GM23248 (cell line): ENCODE measurements at regions of chr9 and their contacts with region 1.

Region 1: DNA sequence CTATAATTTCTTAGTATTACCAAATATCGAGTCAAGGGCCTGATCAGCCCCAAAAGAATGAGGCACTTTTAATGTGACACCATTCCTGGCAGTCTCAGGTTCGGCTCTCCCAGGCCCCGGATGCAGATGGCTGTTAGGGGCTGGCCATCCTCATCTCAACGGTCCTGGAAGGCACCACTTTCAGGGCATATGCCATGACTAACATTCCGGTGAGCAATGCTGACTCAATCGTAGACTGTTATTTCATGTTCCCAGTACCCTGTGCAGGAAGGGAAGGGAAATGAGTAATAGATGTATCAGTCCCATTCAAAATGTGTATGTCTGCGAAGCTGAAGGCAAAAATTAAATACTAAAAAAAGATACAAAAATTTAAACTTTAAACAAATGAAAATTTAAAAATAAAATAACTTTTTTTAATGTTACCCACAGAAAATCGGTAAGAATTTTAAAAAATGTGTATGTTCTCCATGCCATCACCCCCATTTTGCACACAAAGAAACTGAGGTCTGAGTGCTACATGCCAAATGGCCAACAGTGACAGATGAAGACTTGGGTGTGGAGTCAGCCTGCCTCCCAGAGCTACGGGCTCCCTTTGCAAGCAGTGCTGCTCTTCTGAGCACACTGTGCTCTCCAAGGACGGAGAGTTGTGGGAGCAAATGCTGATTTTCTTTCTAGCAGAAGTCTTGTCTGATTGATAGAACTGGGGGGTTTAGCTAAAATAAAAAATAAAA is 79.0 kb downstream of the GLDC start:
- DNase-seq: peak; percentile 99
- H3K4me3 ChIP-seq: peak overlapping the region; percentile 69
- H3K27ac ChIP-seq: peak overlapping the region; percentile 98
- H3K4me1 ChIP-seq: peaks cover 41% of the 10 kb centered on the region
- H3K27me3 ChIP-seq: no peaks in the 10 kb centered on the region

Region 2: DNA sequence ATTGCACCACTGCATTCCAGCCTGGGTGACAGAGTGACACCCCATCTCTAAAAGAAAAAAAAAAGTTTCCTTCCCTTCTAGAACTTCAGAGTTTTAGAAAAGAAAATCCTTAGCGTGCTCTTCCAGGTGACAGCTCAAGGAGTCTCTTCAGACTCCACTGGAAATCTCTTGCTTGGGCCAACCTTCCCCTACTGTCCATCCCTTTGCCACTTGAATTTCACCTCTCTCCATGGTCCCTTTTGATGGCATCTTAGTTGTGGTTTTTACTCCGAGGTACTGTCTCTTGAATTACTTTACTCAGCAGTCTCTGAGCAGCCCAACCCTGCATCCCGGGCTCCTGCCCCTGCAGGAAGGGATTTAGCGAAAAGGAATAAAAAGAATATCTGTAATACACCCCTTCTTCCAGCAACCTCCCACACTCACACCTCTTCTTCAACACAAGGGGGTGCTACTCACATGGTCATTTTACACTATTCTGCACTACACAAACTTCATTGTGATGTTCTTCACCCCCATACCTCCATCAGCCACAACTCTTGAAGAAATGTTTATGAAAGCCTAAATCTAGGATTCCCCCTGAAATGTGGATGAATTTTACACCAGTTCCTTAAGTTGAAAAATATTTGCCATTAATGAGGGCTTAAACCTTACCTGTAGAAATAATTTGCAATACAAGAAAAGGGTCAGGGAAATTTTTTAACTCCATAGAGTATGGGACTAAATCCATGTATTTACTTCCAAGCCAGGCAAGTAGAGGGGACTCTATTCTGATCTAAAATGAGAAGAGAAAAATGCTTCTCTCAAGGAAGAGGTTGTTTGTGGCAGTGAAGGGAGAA is 212.5 kb before region 1 on chr9:
- in situ Hi-C with region 1: loop called (anchors 5 kb)
- DNase-seq: peak; percentile 81
- H3K4me3 ChIP-seq: no peak overlapping the region
- H3K27ac ChIP-seq: no peak overlapping the region
- H3K4me1 ChIP-seq: peaks cover 28% of the 10 kb centered on the region
- H3K27me3 ChIP-seq: no peaks in the 10 kb centered on the region